CD4-positive, alpha-beta T cell (primary cell): ENCODE measurements at regions of chrX and their contacts with region 1.

Region 1: GRCh38 chrX:40468033-40468846 is 112.5 kb upstream of the ATP6AP2 start:
- DNase-seq: peak in 8 of 14 experiments; percentile 4 to 60 (median 38)
- ATAC-seq: peak; percentile 52
- H3K4me3 ChIP-seq: no peak overlapping the region
- H3K4me3 Mint-ChIP-seq: no peak overlapping the region
- H3K27ac ChIP-seq: no peak overlapping the region
- H3K27ac Mint-ChIP-seq: no peak overlapping the region
- H3K4me1 ChIP-seq: peaks cover 27% of the 10 kb centered on the region
- H3K4me1 Mint-ChIP-seq: peaks cover 41% of the 10 kb centered on the region
- H3K27me3 ChIP-seq: no peaks in the 10 kb centered on the region
- H3K27me3 Mint-ChIP-seq: no peaks in the 10 kb centered on the region
- CTCF ChIP-seq: peak; percentile 19

Region 2: DNA sequence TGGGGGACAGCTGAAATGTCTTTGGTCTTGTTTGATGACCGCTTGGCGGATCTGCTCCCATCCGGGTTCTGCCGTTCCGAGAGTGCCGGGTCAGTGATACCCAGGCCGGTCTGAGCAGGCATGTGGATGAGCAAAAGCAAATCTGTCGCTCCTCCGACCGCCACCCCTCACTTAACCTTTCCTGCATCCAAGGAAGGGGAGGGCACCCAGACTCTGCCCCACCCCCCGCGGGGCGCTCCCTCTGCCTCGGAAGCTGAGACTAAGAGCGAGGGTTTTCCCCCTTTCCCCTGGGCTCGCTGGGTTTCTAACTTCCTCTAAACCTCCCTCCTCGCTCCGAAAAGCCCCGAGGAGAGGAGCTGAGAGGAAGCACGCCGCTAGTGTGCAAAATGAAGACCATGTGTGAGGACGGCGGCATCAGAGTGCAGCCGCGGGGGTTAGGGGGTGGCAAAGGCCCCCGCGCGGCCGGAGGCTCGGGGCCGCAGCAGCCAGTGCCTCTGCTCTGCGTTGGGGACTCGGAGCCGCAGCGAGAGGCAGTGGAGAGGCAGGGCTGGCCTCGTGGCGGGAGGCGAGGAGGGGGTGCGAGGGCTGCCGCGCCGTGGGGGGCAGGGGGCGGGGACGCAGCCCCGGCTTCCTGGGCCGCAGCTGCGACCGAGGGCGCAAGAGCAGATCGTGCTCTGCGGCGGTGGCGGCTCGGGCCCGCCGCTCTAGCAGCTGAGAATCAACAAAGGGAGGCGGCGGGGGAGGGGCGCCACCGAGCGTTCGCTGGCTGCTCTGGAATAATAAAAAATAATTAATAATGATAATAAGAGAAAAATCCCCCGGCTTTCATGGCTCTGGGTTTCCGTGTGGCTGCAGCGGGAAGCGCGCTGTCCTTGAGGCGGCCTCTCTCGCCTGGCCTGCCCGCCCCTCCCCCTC is 314.6 kb before region 1 on chrX:
- CTCF ChIA-PET with region 1: no interaction called
- POLR2A ChIA-PET with region 1: interaction called, 3 read pairs
- intact Hi-C with region 1: loop called in 1 of 2 experiments (anchors 10 kb)
- DNase-seq: peak in 9 of 14 experiments; percentile 37 to 85 (median 57)
- ATAC-seq: peak; percentile 62
- H3K4me3 ChIP-seq: peak overlapping the region; percentile 55
- H3K4me3 Mint-ChIP-seq: peak overlapping the region; percentile 92
- H3K27ac ChIP-seq: no peak overlapping the region
- H3K27ac Mint-ChIP-seq: peak overlapping the region; percentile 55
- H3K4me1 ChIP-seq: peaks cover 44% of the 10 kb centered on the region
- H3K4me1 Mint-ChIP-seq: peaks cover 11% of the 10 kb centered on the region
- H3K27me3 ChIP-seq: no peaks in the 10 kb centered on the region
- H3K27me3 Mint-ChIP-seq: no peaks in the 10 kb centered on the region
- CTCF ChIP-seq: no peak